B cell (primary cell): ENCODE measurements at regions of chr1 and their contacts with region 1.

Region 1: GRCh38 chr1:109739738-109740660 is 839 bp downstream of the GSTM3 start:
- DNase-seq: peak; percentile 83
- ATAC-seq: peak; percentile 97
- H3K4me3 ChIP-seq: peak overlapping the region; percentile 27 to 65 (median 62)
- H3K4me3 Mint-ChIP-seq: peak overlapping the region; percentile 89
- H3K27ac ChIP-seq: no peak overlapping the region
- H3K27ac Mint-ChIP-seq: peak overlapping the region; percentile 54
- H3K4me1 ChIP-seq: peaks cover 11 to 16% of the 10 kb centered on the region in 2 donors
- H3K4me1 Mint-ChIP-seq: peaks cover 17% of the 10 kb centered on the region
- H3K27me3 ChIP-seq: peaks cover 0 to 44% (median 18%) of the 10 kb centered on the region in 4 experiments
- H3K27me3 Mint-ChIP-seq: peaks cover 41% of the 10 kb centered on the region
- CTCF ChIP-seq: no peak

Region 2: GRCh38 chr1:109579491-109579890 is 160.5 kb before region 1 on chr1:
- CTCF ChIA-PET with region 1: no interaction called
- POLR2A ChIA-PET with region 1: no interaction called
- intact Hi-C with region 1: no loop called
- DNase-seq: no peak
- ATAC-seq: no peak
- H3K4me3 ChIP-seq: no peak overlapping the region
- H3K4me3 Mint-ChIP-seq: no peak overlapping the region
- H3K27ac ChIP-seq: no peak overlapping the region
- H3K27ac Mint-ChIP-seq: no peak overlapping the region
- H3K4me1 ChIP-seq: no peaks in the 10 kb centered on the region
- H3K4me1 Mint-ChIP-seq: no peaks in the 10 kb centered on the region
- H3K27me3 ChIP-seq: no peaks in the 10 kb centered on the region
- H3K27me3 Mint-ChIP-seq: no peaks in the 10 kb centered on the region
- CTCF ChIP-seq: no peak

Region 3: DNA sequence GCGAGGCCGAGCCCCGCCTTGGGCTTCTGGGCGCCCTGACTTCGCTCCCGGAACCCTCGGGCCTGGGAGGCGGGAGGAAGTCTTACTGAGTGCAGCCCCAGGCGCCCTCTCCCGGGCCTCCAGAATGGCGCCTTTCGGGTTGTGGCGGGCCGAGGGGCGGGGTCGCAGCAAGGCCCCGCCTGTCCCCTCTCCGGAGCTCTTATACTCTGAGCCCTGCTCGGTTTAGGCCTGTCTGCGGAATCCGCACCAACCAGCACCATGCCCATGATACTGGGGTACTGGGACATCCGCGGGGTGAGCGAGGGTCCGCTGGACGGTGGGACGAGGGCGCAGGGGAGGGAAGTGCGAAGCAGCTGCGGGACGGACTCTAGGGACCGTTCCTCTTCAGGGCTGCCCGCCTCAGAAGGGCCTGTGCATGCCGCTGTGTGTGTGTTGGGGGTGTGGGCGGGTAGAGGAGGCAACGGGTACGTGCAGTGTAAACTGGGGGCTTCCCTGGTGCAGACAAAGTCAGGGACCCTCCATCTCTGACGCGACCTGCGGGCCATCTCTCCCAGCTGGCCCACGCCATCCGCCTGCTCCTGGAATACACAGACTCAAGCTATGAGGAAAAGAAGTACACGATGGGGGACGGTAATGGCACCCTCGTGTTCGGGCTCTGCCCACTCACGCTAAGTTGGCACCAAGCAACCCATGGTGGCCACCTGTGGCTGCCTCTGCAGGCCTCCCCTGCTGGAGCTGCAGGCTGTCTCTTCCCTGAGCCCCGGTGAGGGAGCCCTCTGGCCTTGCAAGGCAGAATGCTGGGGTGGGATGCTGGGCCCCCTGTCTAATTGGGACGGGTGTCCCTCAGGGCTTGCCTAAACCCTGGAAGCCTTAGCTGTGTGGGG is 52.1 kb before region 1 on chr1 and contains the start of gene GSTM1:
- CTCF ChIA-PET with region 1: interaction called, 3 read pairs
- POLR2A ChIA-PET with region 1: no interaction called
- intact Hi-C with region 1: loop called (anchors 2 kb)
- DNase-seq: peak; percentile 81
- ATAC-seq: peak; percentile 98
- H3K4me3 ChIP-seq: peak within 1 kb of the TSS in 3 of 5 experiments; percentile 56 to 82 (median 64)
- H3K4me3 Mint-ChIP-seq: peak within 1 kb of the TSS; percentile 92
- H3K27ac ChIP-seq: peak within 1 kb of the TSS in 1 of 2 donors; percentile 63
- H3K27ac Mint-ChIP-seq: peak within 1 kb of the TSS; percentile 92
- H3K4me1 ChIP-seq: no peaks in the 10 kb centered on the region
- H3K4me1 Mint-ChIP-seq: peaks cover 6% of the 10 kb centered on the region
- H3K27me3 ChIP-seq: no peaks in the 10 kb centered on the region
- H3K27me3 Mint-ChIP-seq: no peaks in the 10 kb centered on the region
- CTCF ChIP-seq: peak; percentile 20
- total RNA-seq, gene GSTM1: 28.8 and 30.5 TPM in 2 replicates

Region 4: DNA sequence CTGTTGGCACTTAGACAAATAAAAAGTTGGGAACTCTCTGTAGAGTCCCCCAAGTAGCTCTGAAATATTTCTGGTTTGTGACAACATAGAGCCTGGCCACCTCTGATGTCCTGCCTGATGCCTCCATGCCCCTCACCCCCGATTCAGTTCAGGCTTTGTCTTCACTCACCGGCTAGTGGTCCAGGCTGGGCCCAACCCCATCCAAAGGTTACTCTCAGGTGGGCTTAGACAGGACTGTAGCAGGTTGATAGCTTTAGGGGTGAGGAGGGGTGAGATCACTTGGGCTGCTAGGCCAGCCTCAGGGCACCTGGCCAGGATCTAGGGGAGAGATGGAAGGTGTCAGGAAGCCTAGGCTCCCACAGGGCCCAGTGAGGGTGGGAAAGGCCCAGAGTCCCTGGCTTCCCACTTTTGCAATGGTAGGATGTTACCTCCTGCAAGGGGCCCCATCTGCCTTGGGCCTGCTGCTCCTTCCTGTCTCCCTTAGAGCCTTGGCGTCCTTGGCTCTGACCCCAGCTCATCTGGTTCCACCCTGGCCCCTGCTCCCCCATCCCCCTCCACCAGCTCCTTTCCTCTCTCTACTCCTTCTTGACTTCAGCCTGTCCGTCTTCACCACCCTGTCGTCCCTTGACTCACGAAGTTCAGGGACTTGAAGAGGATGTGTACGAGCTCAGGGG is 17.0 kb after region 1 on chr1:
- CTCF ChIA-PET with region 1: no interaction called
- POLR2A ChIA-PET with region 1: no interaction called
- intact Hi-C with region 1: no loop called
- DNase-seq: no peak
- ATAC-seq: no peak
- H3K4me3 ChIP-seq: no peak overlapping the region
- H3K4me3 Mint-ChIP-seq: no peak overlapping the region
- H3K27ac ChIP-seq: no peak overlapping the region
- H3K27ac Mint-ChIP-seq: no peak overlapping the region
- H3K4me1 ChIP-seq: no peaks in the 10 kb centered on the region
- H3K4me1 Mint-ChIP-seq: no peaks in the 10 kb centered on the region
- H3K27me3 ChIP-seq: no peaks in the 10 kb centered on the region
- H3K27me3 Mint-ChIP-seq: peaks cover 8% of the 10 kb centered on the region
- CTCF ChIP-seq: no peak

Region 5: DNA sequence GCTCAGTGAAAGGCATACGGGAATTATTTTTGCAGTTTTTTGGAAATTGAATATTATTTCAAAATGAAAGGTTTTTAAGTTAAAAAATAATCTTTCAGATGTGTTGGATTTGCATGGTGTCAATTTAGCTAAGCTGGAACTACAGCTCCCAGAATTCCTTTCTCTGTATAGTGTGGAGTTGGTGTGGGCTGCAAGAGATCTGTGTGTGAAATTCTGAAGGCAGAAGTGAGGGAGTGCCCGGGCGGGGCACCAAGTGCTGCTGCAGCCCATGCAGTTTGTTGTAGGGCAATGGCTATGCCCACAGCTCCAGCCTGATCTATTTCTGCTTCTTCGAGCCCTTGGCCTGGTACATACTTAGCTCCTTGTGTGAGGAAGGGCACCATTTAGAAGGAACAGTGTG is 110.2 kb after region 1 on chr1:
- CTCF ChIA-PET with region 1: no interaction called
- POLR2A ChIA-PET with region 1: interaction called, 11 read pairs
- intact Hi-C with region 1: no loop called
- DNase-seq: no peak
- ATAC-seq: no peak
- H3K4me3 ChIP-seq: no peak overlapping the region
- H3K4me3 Mint-ChIP-seq: no peak overlapping the region
- H3K27ac ChIP-seq: no peak overlapping the region
- H3K27ac Mint-ChIP-seq: no peak overlapping the region
- H3K4me1 ChIP-seq: no peaks in the 10 kb centered on the region
- H3K4me1 Mint-ChIP-seq: no peaks in the 10 kb centered on the region
- H3K27me3 ChIP-seq: peaks cover 0 to 1% (median 0%) of the 10 kb centered on the region in 4 experiments
- H3K27me3 Mint-ChIP-seq: peaks cover 7% of the 10 kb centered on the region
- CTCF ChIP-seq: no peak